Uterus (tissue), 4 donors: ENCODE measurements at regions of chr17 and their contacts with region 1.

Region 1: DNA sequence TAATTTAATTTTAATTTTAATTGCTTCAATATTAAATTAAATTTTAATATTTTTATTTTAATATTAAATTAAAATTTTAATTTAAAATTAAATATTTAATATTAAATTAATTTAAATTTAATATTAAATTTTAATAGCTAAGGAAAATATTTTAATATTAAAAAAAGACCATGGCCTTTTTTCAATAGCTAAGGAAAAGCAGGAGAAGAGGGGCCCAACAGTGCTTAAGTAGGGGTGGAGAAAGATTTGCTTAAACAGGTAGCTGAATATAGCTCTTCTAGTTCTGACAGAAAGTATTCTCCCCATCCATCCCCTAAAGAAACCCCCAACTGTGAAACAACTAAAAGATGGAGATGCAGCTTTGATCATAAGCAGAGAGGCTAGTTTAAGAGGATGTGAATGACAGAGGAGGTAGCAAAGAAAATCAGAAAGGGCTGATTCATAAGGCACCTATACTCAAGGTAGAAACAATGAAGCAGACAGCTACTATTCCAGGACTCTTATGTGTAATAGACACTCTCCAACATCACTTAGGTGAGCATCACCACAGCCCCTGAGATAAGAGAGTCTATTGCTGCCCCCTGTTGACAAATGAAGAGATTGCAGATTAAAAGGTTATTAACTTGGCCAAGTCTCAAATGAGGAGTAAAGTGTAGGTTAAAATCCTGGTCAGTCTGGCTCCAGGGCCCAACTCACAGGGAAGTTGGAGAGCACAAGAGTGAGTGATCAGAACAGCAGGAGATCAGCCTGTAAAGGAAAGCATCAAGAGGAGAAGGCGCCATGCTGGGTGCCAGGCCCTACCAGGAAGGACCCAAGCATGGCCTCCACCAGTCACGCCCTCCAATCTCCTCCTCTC is 7.8 kb upstream of the RNASEK start:
- DNase-seq: no peak
- H3K4me3 ChIP-seq: no peak overlapping the region
- H3K27ac ChIP-seq: no peak overlapping the region
- H3K4me1 ChIP-seq: no peaks in the 10 kb centered on the region
- H3K27me3 ChIP-seq: no peaks in the 10 kb centered on the region
- CTCF ChIP-seq: peak; percentile 56 to 77 (median 66)
- POLR2A ChIP-seq: no peak

Region 2: GRCh38 chr17:5630434-5630833 is 1374.2 kb before region 1 on chr17:
- intact Hi-C with region 1: no loop called
- DNase-seq: no peak
- H3K4me3 ChIP-seq: no peak overlapping the region
- H3K27ac ChIP-seq: no peak overlapping the region
- H3K4me1 ChIP-seq: no peaks in the 10 kb centered on the region
- H3K27me3 ChIP-seq: no peaks in the 10 kb centered on the region
- CTCF ChIP-seq: no peak
- POLR2A ChIP-seq: no peak

Region 3: DNA sequence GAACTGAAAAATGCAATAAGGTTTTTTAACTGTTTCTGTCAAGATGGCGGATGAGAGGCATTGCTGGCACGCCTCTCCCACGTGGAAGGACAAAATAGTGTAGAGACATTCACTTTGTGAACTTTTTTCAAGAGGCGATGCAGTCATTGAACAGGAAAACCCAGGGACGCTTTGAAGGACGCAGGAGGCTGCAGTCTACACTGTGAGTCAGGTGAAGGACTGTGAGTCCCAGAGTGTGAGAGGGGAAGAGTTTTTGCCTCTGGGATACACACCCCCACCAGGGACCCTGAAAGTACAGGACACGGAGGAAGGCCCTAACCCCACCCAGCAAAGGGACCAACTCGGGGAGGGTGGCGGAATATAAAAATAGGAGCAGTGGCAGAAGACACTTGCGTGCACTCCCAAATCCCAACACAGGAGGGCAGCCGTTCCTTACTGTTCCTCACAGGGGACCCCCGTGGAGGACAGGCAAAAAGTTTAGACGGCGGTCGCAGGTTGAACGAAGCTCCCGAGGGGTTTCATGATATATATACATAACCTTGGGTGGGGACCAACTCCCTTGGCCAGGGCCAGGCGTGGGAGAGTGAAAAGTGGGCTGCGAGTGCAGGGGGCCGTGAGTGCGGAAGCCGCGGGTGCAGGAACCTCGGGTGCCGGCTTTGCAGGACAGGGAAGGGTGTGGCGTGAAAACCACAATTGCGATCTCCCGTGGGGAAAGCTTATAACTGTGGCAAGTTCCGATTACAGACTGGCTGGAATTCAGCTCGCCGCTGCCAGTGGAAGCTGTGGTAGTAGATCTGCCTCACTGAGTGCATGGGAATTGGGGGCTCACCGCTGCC is 90.8 kb before region 1 on chr17:
- intact Hi-C with region 1: loop called (anchors 10 kb)
- DNase-seq: peak; percentile 68 to 72
- H3K4me3 ChIP-seq: no peak overlapping the region
- H3K27ac ChIP-seq: no peak overlapping the region
- H3K4me1 ChIP-seq: no peaks in the 10 kb centered on the region
- H3K27me3 ChIP-seq: no peaks in the 10 kb centered on the region
- CTCF ChIP-seq: peak; percentile 59 to 80 (median 68)
- POLR2A ChIP-seq: no peak